ENCODE measurements at regions of chr1 and their contacts with region 1.

Region 1: GRCh38 chr1:3727042-3727824 is 25.0 kb upstream of the CCDC27 start:
- DNase-seq: no peak
- H3K4me3 ChIP-seq: no peak overlapping the region
- CTCF ChIP-seq: peak; percentile 56

Region 2: DNA sequence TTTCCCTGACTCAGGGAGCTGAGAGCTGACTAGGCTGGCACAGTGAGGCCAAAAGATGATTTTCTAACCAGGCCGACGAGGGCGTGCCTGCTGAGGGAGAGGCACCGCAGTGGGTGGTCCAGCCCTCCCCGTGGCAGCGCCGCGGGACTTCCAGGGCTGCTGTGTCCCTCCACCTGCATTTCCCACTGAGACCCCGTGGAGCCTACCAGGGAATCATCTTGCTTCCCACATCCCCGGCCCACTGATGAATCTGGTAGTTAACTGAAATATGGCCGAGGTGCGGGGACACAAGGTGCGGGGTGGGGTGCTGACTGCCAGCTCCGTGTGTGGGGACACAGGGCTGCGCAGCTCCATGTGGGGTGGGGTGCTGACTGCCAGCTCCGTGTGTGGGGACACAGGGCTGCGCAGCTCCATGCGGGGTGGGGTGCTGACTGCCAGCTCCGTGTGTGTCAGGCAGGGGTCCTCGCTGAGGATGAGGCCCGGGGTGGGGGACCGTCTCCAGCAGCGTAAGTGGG is 87.8 kb before region 1 on chr1:
- CTCF ChIA-PET with region 1: no interaction called
- POLR2A ChIA-PET with region 1: no interaction called
- DNase-seq: no peak
- H3K4me3 ChIP-seq: no peak overlapping the region
- CTCF ChIP-seq: no peak

Region 3: DNA sequence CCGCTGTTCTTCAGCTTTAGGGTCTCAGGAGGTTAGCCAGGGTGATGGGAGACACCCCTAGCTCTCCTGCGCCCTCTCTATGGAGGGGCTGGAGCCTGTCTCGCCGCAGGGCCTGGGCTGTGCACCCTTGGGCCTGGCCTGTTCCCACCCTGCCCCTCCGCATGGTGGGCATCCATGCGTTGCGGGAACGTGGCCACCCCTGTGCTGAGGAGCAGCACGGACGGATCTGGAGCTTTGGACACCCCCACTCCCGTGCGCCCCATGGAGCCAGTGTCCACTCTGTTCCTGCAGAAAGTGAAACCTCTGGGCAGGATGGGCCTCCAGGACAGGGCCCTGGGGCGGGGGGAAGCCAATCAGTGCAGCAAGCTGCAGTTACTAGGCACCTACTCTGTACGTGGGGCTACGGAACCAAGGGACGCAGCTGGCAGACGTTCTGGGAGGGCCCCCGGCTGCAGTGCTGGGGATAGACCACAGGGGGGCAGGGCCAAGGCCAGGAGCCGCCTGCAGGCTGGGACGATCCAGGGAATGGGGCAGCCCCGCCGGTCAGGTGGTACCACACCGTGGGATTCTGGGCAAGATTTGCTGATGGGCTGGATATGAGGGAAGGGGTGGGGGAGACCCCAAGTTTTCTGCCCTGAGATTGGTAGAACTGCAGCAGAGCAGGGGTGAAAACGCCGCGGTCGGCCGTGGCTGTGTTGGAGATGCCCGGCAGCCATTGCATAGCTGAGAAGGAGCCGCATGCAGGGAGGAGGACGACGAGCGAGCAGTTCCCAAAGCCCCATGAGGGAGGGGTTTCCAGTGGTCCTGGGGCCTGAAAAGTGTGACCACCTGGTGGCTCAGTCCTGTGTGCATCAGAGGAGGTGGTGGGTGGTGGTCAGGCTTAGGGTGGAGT is 31.7 kb before region 1 on chr1:
- CTCF ChIA-PET with region 1: interaction called, 17 read pairs
- POLR2A ChIA-PET with region 1: no interaction called
- DNase-seq: no peak
- H3K4me3 ChIP-seq: no peak overlapping the region
- CTCF ChIP-seq: peak; percentile 83

Region 4: GRCh38 chr1:3714284-3714741 is 12.9 kb before region 1 on chr1:
- CTCF ChIA-PET with region 1: interaction called, 23 read pairs
- POLR2A ChIA-PET with region 1: no interaction called
- DNase-seq: no peak
- H3K4me3 ChIP-seq: no peak overlapping the region
- CTCF ChIP-seq: no peak

Region 5: GRCh38 chr1:3827813-3828307 is 100.6 kb after region 1 on chr1:
- CTCF ChIA-PET with region 1: no interaction called
- POLR2A ChIA-PET with region 1: no interaction called
- DNase-seq: no peak
- H3K4me3 ChIP-seq: no peak overlapping the region
- CTCF ChIP-seq: no peak